CD4-positive, alpha-beta T cell (primary cell): ENCODE measurements at regions of chr19 and their contacts with region 1.

Region 1: GRCh38 chr19:19732579-19733501 is at the start of gene ZNF14:
- DNase-seq: peak; percentile 83 to 96 (median 88)
- ATAC-seq: peak; percentile 99
- H3K4me3 ChIP-seq: peak within 1 kb of the TSS; percentile 95
- H3K4me3 Mint-ChIP-seq: peak within 1 kb of the TSS; percentile 99
- H3K27ac ChIP-seq: peak within 1 kb of the TSS; percentile 69 to 79
- H3K27ac Mint-ChIP-seq: peak within 1 kb of the TSS; percentile 94
- H3K4me1 ChIP-seq: peaks cover 33% of the 10 kb centered on the region
- H3K4me1 Mint-ChIP-seq: peaks cover 27% of the 10 kb centered on the region
- H3K27me3 ChIP-seq: no peaks in the 10 kb centered on the region
- H3K27me3 Mint-ChIP-seq: no peaks in the 10 kb centered on the region
- CTCF ChIP-seq: no peak
- total RNA-seq, gene ZNF14: 36.9 to 37.3 TPM

Region 2: DNA sequence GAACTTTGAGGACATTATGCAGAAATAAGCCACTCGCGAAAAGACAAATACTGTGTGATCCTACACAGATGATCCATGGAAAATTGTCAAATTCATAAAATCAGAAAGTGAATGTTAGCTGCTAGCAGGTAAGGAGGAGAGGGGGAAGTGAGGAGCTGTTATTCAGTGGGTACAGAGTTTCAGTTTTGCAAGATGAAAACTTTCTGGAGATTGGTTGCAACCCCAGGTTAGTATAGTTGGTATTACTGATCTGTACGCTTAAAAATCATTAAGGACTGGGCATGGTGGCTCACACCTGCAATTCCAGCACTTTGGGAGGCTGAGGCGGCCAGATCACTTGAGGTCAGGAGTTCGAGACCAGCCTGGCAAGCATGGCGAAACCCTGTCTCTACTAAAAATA is 46.3 kb before region 1 on chr19:
- CTCF ChIA-PET with region 1: no interaction called
- POLR2A ChIA-PET with region 1: interaction called, 12 read pairs
- intact Hi-C with region 1: no loop called
- DNase-seq: no peak
- ATAC-seq: peak; percentile 28
- H3K4me3 ChIP-seq: no peak overlapping the region
- H3K4me3 Mint-ChIP-seq: no peak overlapping the region
- H3K27ac ChIP-seq: no peak overlapping the region
- H3K27ac Mint-ChIP-seq: no peak overlapping the region
- H3K4me1 ChIP-seq: no peaks in the 10 kb centered on the region
- H3K4me1 Mint-ChIP-seq: no peaks in the 10 kb centered on the region
- H3K27me3 ChIP-seq: no peaks in the 10 kb centered on the region
- H3K27me3 Mint-ChIP-seq: no peaks in the 10 kb centered on the region
- CTCF ChIP-seq: no peak

Region 3: GRCh38 chr19:19821366-19821951 is 88.6 kb after region 1 on chr19 and contains the start of gene ZNF506:
- CTCF ChIA-PET with region 1: no interaction called
- POLR2A ChIA-PET with region 1: interaction called, 47 read pairs
- intact Hi-C with region 1: loop called (anchors 5 kb)
- DNase-seq: peak; percentile 95 to 99 (median 97)
- ATAC-seq: peak; percentile 79
- H3K4me3 ChIP-seq: peak within 1 kb of the TSS; percentile 62
- H3K4me3 Mint-ChIP-seq: peak within 1 kb of the TSS; percentile 99
- H3K27ac ChIP-seq: peak within 1 kb of the TSS; percentile 97
- H3K27ac Mint-ChIP-seq: peak within 1 kb of the TSS; percentile 86
- H3K4me1 ChIP-seq: peaks cover 45% of the 10 kb centered on the region
- H3K4me1 Mint-ChIP-seq: peaks cover 44% of the 10 kb centered on the region
- H3K27me3 ChIP-seq: no peaks in the 10 kb centered on the region
- H3K27me3 Mint-ChIP-seq: no peaks in the 10 kb centered on the region
- CTCF ChIP-seq: no peak
- total RNA-seq, gene ZNF506: 48.0 to 50.7 TPM

Region 4: DNA sequence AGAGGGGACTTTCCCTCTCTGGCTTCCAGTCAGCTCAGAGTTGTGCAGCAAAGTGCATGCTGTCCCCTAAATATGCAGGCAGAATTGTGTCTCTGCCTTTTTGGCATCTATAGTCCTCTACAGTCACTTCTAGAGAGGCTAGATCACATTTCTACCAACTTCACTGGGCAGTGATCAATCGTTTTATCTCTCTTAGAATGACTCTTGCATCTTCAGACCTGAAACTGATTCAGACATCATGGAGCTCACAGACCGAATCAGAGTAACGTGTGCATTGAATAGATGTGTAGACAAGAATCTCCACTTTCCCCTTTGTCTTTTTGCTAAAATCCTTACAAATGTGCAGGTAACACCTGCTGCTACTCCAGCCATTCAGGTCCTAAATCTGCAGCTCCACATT is 139.1 kb after region 1 on chr19:
- CTCF ChIA-PET with region 1: no interaction called
- POLR2A ChIA-PET with region 1: interaction called, 12 read pairs
- intact Hi-C with region 1: loop called in 1 of 2 experiments (anchors 5 kb)
- DNase-seq: no peak
- ATAC-seq: no peak
- H3K4me3 ChIP-seq: no peak overlapping the region
- H3K4me3 Mint-ChIP-seq: peak overlapping the region; percentile 0
- H3K27ac ChIP-seq: no peak overlapping the region
- H3K27ac Mint-ChIP-seq: peak overlapping the region; percentile 75
- H3K4me1 ChIP-seq: peaks cover 13% of the 10 kb centered on the region
- H3K4me1 Mint-ChIP-seq: peaks cover 57% of the 10 kb centered on the region
- H3K27me3 ChIP-seq: no peaks in the 10 kb centered on the region
- H3K27me3 Mint-ChIP-seq: no peaks in the 10 kb centered on the region
- CTCF ChIP-seq: no peak

Region 5: DNA sequence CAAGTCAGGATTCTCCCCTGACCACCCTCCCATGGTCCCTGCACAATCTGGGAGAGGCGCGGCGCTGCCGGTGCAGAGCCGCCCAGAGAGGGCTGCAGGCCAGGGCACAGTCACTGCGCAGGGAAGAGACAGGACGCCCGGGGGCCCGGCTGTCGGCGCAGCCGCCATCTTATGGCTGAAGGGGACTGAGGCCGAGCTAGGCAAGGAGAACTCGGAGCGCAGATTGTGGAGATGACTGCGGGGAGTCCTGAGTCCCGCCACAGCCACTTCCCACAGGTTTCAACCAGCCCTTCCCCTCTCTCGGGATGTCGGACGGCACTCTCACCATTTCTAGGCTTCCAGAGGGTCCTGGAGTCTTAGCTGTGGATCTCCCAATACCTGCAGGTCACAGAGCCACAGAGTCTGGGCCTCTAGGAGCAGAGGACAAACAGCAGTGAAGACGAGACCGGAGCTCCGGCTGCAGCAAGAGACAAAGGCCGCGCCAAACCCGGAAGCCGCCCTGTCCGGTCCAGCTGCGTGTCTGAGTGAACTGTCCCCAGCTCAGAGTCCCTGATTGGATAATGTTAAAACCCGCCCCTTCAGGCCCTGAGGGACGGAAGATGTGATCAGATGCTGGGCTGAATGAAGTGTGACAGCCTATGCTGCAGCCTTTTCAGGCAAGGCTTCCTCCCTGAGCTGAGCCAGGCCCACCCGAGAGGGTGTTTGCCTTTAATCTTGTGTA is 1596.2 kb after region 1 on chr19 and contains the start of gene ZNF708:
- CTCF ChIA-PET with region 1: no interaction called
- POLR2A ChIA-PET with region 1: interaction called, 10 read pairs
- intact Hi-C with region 1: no loop called
- DNase-seq: peak; percentile 41 to 96 (median 59)
- ATAC-seq: peak; percentile 91
- H3K4me3 ChIP-seq: peak within 1 kb of the TSS; percentile 99
- H3K4me3 Mint-ChIP-seq: peak within 1 kb of the TSS; percentile 96
- H3K27ac ChIP-seq: peak within 1 kb of the TSS; percentile 83 to 99
- H3K27ac Mint-ChIP-seq: peak within 1 kb of the TSS; percentile 98
- H3K4me1 ChIP-seq: peaks cover 22% of the 10 kb centered on the region
- H3K4me1 Mint-ChIP-seq: peaks cover 50% of the 10 kb centered on the region
- H3K27me3 ChIP-seq: no peaks in the 10 kb centered on the region
- H3K27me3 Mint-ChIP-seq: no peaks in the 10 kb centered on the region
- CTCF ChIP-seq: no peak
- total RNA-seq, gene ZNF708: 15.5 to 16.4 TPM